ENCODE measurements at regions of chr5 and their contacts with region 1.

Region 1: GRCh38 chr5:149268928-149269557 is 2.6 kb upstream of the AFAP1L1 start:
- DNase-seq: peak in 7 of 9 donors; percentile 40 to 67 (median 57)
- ATAC-seq: peak; percentile 70
- H3K4me3 ChIP-seq: no peak overlapping the region
- H3K4me3 Mint-ChIP-seq: peak overlapping the region in 2 of 10 donors; percentile 3 to 10
- H3K27ac ChIP-seq: no peak overlapping the region
- H3K27ac Mint-ChIP-seq: peak overlapping the region in 1 of 9 donors; percentile 2
- H3K4me1 ChIP-seq: peaks cover 0 to 6% of the 10 kb centered on the region in 2 donors
- H3K4me1 Mint-ChIP-seq: peaks cover 7 to 22% (median 16%) of the 10 kb centered on the region in 7 donors
- H3K27me3 ChIP-seq: peaks cover 0 to 3% of the 10 kb centered on the region in 2 donors
- H3K27me3 Mint-ChIP-seq: peaks cover 17 to 67% (median 31%) of the 10 kb centered on the region in 5 donors

Region 2: GRCh38 chr5:148730943-148731861 is 537.8 kb before region 1 on chr5:
- CTCF ChIA-PET with region 1: interaction called, 5 read pairs
- POLR2A ChIA-PET with region 1: no interaction called
- intact Hi-C with region 1: loop called (anchors 1 to 5 kb)
- DNase-seq: peak; percentile 23 to 77 (median 63)
- ATAC-seq: peak; percentile 98
- H3K4me3 ChIP-seq: no peak overlapping the region
- H3K4me3 Mint-ChIP-seq: peak overlapping the region in 2 of 10 donors; percentile 40 to 61
- H3K27ac ChIP-seq: no peak overlapping the region
- H3K27ac Mint-ChIP-seq: no peak overlapping the region
- H3K4me1 ChIP-seq: no peaks in the 10 kb centered on the region
- H3K4me1 Mint-ChIP-seq: peaks cover 0 to 8% (median 5%) of the 10 kb centered on the region in 7 donors
- H3K27me3 ChIP-seq: no peaks in the 10 kb centered on the region
- H3K27me3 Mint-ChIP-seq: peaks cover 4 to 25% (median 9%) of the 10 kb centered on the region in 5 donors

Region 3: DNA sequence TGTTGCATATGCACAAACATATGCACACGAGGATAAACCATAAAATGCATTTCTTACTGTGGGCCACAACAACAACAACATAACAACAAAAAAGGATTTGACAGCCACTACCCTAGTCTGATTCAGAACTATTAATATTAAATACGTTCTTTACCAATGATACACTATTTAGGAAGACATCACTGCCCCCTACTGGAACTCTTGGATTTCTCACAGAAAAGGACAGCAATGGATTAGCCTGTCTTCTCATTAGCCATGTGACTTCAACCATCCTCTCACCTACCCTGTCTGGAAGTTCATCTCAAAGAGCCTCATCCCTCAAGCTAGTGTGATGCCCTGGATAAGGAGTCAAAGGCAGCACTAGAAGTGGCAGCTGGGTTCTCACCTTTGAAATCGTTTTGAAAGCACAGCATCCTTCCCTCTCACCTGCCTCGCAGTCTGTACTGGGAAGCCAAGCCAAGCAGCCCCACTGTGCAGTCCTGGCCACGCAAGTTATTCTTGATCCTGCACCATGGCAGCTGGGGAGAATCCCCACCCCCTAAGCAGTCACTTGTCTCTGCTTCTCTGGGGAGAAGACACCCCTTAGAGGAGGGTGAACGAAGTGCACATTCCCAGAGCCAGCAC is 270.8 kb before region 1 on chr5:
- CTCF ChIA-PET with region 1: no interaction called
- POLR2A ChIA-PET with region 1: no interaction called
- intact Hi-C with region 1: loop called in 1 of 2 experiments (anchors 5 kb)
- DNase-seq: peak in 5 of 9 donors; percentile 5 to 25 (median 17)
- ATAC-seq: peak; percentile 67
- H3K4me3 ChIP-seq: no peak overlapping the region
- H3K4me3 Mint-ChIP-seq: no peak overlapping the region
- H3K27ac ChIP-seq: no peak overlapping the region
- H3K27ac Mint-ChIP-seq: no peak overlapping the region
- H3K4me1 ChIP-seq: no peaks in the 10 kb centered on the region
- H3K4me1 Mint-ChIP-seq: no peaks in the 10 kb centered on the region
- H3K27me3 ChIP-seq: no peaks in the 10 kb centered on the region
- H3K27me3 Mint-ChIP-seq: peaks cover 19 to 61% (median 28%) of the 10 kb centered on the region in 5 donors

Region 4: DNA sequence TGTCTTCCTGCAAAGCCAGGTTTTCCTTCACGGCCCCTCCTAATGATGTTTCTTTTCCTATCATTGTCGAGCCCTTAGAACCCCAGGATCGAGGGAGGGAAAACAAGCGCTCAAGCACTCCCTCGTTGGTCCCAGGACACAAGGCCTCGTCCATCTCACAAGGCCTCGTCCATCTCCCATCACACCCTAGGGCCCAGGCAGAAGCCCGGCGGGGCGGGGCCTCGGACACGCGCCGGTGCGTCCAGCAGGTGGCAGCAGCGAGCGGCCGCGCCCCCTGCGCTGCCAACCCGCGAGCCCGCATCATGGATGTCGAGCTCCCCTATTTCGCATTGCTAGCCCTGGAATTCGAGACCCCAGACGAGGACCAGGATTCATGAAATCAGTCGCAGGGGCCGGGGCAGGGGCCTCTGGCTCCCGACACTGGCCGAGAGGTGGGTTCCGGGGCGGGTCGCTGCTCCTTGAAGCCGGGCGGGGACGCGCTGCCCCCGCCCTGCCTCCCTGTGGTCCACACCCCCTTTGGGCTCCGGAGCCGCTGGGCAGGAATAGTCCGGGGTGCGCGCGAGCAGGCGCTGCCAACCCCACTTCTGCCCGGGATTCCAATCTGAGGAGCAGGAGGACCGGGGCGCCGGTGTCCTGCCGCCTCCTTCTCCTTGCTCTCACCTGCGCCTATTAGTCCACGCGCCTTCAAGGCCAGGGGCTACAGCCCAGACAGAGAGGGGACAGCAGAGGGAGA is 127.7 kb before region 1 on chr5 and contains the start of gene ABLIM3:
- CTCF ChIA-PET with region 1: interaction called, 142 read pairs
- POLR2A ChIA-PET with region 1: interaction called, 5 read pairs
- intact Hi-C with region 1: loop called (anchors 1 kb)
- DNase-seq: peak; percentile 49 to 87 (median 74)
- ATAC-seq: peak; percentile 96
- H3K4me3 ChIP-seq: peak within 1 kb of the TSS; percentile 62
- H3K4me3 Mint-ChIP-seq: peak within 1 kb of the TSS; percentile 11 to 79 (median 62)
- H3K27ac ChIP-seq: no peak within 1 kb of the TSS
- H3K27ac Mint-ChIP-seq: peak within 1 kb of the TSS in 1 of 9 donors; percentile 71
- H3K4me1 ChIP-seq: peaks cover 3 to 4% of the 10 kb centered on the region in 2 donors
- H3K4me1 Mint-ChIP-seq: peaks cover 0 to 6% (median 0%) of the 10 kb centered on the region in 7 donors
- H3K27me3 ChIP-seq: peaks cover 0 to 4% of the 10 kb centered on the region in 2 donors
- H3K27me3 Mint-ChIP-seq: peaks cover 5 to 58% (median 28%) of the 10 kb centered on the region in 5 donors
- total RNA-seq, gene ABLIM3: 0.08 to 1.3 TPM in 2 of 5 experiments, not detected in the others

Region 5: DNA sequence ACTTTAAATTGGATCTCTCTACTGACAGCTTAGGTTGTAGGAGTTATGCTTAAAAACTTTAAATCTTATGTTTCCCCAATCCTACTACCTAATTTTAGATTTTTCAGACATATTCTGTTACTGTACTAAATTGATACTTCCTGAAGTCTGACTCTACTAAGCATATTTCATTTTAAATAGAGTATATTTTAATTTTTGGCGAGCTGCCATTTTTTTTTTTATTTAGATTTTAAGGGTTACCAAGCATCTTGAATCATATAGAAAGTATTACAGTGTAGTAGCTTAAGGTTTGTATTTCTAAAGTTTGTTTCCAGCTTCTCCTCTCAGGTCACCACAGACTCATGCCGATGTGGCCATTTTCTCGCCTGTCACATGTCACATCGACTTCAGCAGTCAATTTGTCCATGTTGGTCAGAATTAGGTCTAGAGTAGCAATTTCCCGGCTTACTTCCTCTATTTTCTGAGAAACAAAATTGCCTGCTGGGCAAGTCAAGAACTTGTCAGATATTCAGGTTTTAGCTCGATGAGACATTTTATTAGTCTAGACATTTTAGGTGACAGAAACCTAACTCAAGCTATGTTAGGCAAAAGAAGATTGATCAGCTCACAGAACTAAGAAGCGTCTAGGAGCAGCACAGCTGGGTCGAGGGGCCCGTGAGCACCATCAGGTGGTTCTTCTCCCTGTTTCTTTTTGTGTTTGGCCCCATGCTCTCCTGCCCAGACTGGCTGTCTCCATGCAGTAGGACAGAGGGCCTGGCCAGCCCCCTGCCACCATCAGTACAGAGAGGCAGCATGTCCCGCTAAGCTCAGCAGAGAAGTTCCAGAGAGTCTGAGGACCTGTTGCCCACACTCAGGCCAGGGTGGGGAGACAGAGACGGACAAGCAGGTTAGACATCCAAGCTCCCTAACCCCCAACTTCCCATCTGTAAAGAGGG is 45.9 kb before region 1 on chr5:
- CTCF ChIA-PET with region 1: interaction called, 3 read pairs
- POLR2A ChIA-PET with region 1: no interaction called
- intact Hi-C with region 1: loop called in 1 of 2 experiments (anchors 2 kb)
- DNase-seq: no peak
- ATAC-seq: peak; percentile 34
- H3K4me3 ChIP-seq: no peak overlapping the region
- H3K4me3 Mint-ChIP-seq: no peak overlapping the region
- H3K27ac ChIP-seq: no peak overlapping the region
- H3K27ac Mint-ChIP-seq: no peak overlapping the region
- H3K4me1 ChIP-seq: no peaks in the 10 kb centered on the region
- H3K4me1 Mint-ChIP-seq: peaks cover 0 to 3% (median 0%) of the 10 kb centered on the region in 7 donors
- H3K27me3 ChIP-seq: no peaks in the 10 kb centered on the region
- H3K27me3 Mint-ChIP-seq: peaks cover 0 to 4% (median 2%) of the 10 kb centered on the region in 5 donors

Region 6: GRCh38 chr5:149298842-149299404 is 29.9 kb after region 1 on chr5:
- CTCF ChIA-PET with region 1: interaction called, 6 read pairs
- POLR2A ChIA-PET with region 1: no interaction called
- intact Hi-C with region 1: loop called in 1 of 2 experiments (anchors 1 kb)
- DNase-seq: no peak
- ATAC-seq: no peak
- H3K4me3 ChIP-seq: no peak overlapping the region
- H3K4me3 Mint-ChIP-seq: peak overlapping the region in 9 of 10 donors; percentile 23 to 84 (median 71)
- H3K27ac ChIP-seq: no peak overlapping the region
- H3K27ac Mint-ChIP-seq: peak overlapping the region in 8 of 9 donors; percentile 60 to 95 (median 84)
- H3K4me1 ChIP-seq: peaks cover 0 to 56% of the 10 kb centered on the region in 2 donors
- H3K4me1 Mint-ChIP-seq: peaks cover 4 to 67% (median 57%) of the 10 kb centered on the region in 7 donors
- H3K27me3 ChIP-seq: no peaks in the 10 kb centered on the region
- H3K27me3 Mint-ChIP-seq: peaks cover 0 to 11% (median 0%) of the 10 kb centered on the region in 5 donors

Region 7: DNA sequence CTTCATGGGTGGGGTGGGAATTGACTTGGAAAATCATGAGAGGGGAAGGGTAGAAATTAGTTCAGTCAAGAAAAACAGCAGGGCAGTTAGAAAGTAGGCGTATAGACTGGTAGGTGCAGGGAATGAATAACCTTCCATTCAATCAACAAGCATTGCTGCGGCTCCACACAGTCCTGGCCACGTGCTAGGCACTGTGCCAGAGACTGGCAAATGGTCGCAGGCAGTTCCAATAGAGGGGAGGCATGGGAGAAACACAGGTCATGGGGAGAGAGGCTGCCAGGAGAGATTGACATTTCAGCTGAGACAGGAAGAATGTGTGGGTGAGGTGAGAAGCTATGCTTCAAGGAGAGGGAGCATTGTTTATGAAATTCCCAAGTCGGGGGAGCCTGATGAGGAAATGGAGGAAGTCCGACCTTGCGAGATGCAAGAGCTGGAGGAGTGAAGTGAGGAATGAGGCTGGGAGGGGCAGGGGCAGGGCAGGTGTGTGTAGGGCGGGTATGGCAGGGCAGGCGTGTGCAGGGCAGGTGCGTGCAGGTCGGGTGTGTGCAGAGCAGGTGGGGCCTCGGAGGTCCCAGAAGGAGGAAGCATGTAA is 406.7 kb after region 1 on chr5:
- CTCF ChIA-PET with region 1: no interaction called
- POLR2A ChIA-PET with region 1: no interaction called
- intact Hi-C with region 1: no loop called
- DNase-seq: no peak
- ATAC-seq: no peak
- H3K4me3 ChIP-seq: no peak overlapping the region
- H3K4me3 Mint-ChIP-seq: no peak overlapping the region
- H3K27ac ChIP-seq: no peak overlapping the region
- H3K27ac Mint-ChIP-seq: no peak overlapping the region
- H3K4me1 ChIP-seq: no peaks in the 10 kb centered on the region
- H3K4me1 Mint-ChIP-seq: peaks cover 0 to 1% (median 0%) of the 10 kb centered on the region in 7 donors
- H3K27me3 ChIP-seq: no peaks in the 10 kb centered on the region
- H3K27me3 Mint-ChIP-seq: peaks cover 7 to 29% (median 12%) of the 10 kb centered on the region in 5 donors

Region 8: DNA sequence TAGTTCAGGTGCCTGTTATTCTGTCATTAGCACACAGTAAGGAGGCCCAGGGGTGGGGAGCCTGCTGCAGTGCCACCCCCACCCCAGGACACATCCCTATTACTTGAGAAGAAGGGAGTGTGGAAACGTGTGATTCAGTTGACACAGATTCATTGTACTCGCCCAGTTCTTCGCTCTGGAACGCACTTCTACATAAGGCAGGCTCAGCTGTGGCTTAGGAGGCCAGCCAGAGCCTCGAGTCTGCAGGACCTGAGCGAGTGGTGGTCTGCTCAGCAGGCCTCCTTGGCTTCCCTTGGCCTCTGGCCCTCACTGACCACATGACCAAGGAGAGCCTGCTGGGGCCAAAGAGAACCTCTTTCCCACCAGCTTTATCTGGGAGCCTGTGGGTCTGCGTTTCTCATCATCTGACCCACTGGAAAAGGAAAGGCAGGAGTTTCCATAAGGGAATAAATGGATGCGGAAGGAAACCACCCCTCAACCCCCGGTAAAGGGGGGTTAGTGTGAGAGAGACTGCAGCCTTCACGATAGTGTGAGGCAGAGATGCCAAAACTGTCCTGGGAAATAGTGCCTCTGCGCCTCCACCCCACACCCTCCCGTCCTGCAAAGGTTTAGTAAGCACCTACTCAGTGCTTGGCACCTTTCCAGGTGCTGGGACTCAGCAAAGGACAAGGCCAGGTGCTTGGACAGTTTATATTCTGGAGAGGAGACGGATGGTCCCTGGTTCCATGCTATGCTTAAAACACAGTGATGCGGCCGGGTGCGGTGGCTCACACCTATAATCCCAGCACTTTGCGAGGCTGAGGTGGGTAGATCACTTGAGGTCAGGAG is 534.8 kb after region 1 on chr5:
- CTCF ChIA-PET with region 1: no interaction called
- POLR2A ChIA-PET with region 1: no interaction called
- intact Hi-C with region 1: no loop called
- DNase-seq: no peak
- ATAC-seq: no peak
- H3K4me3 ChIP-seq: no peak overlapping the region
- H3K4me3 Mint-ChIP-seq: peak overlapping the region in 1 of 10 donors; percentile 1
- H3K27ac ChIP-seq: no peak overlapping the region
- H3K27ac Mint-ChIP-seq: no peak overlapping the region
- H3K4me1 ChIP-seq: no peaks in the 10 kb centered on the region
- H3K4me1 Mint-ChIP-seq: peaks cover 0 to 19% (median 6%) of the 10 kb centered on the region in 7 donors
- H3K27me3 ChIP-seq: no peaks in the 10 kb centered on the region
- H3K27me3 Mint-ChIP-seq: no peaks in the 10 kb centered on the region